Endothelial cell of umbilical vein (primary cell): ENCODE measurements at regions of chr10 and their contacts with region 1.

Region 1: GRCh38 chr10:102420810-102421644 is at the start of gene FBXL15:
- DNase-seq: peak; percentile 96
- H3K4me3 ChIP-seq: peak within 1 kb of the TSS; percentile 64 to 73 (median 70)
- H3K27ac ChIP-seq: no peak within 1 kb of the TSS
- H3K4me1 ChIP-seq: peaks cover 20% of the 10 kb centered on the region
- H3K27me3 ChIP-seq: peaks cover 3 to 7% of the 10 kb centered on the region in 2 experiments
- CTCF ChIP-seq: no peak
- POLR2A ChIP-seq: peak; percentile 27
- total RNA-seq, gene FBXL15: 9.9 and 10.7 TPM in 2 replicates

Region 2: GRCh38 chr10:101901340-101901739 is 519.7 kb before region 1 on chr10:
- CTCF ChIA-PET with region 1: no interaction called
- POLR2A ChIA-PET with region 1: no interaction called
- dilution Hi-C with region 1: no loop called
- intact Hi-C with region 1: no loop called
- DNase-seq: no peak
- H3K4me3 ChIP-seq: no peak overlapping the region
- H3K27ac ChIP-seq: no peak overlapping the region
- H3K4me1 ChIP-seq: no peaks in the 10 kb centered on the region
- H3K27me3 ChIP-seq: no peaks in the 10 kb centered on the region
- CTCF ChIP-seq: no peak
- POLR2A ChIP-seq: no peak

Region 3: DNA sequence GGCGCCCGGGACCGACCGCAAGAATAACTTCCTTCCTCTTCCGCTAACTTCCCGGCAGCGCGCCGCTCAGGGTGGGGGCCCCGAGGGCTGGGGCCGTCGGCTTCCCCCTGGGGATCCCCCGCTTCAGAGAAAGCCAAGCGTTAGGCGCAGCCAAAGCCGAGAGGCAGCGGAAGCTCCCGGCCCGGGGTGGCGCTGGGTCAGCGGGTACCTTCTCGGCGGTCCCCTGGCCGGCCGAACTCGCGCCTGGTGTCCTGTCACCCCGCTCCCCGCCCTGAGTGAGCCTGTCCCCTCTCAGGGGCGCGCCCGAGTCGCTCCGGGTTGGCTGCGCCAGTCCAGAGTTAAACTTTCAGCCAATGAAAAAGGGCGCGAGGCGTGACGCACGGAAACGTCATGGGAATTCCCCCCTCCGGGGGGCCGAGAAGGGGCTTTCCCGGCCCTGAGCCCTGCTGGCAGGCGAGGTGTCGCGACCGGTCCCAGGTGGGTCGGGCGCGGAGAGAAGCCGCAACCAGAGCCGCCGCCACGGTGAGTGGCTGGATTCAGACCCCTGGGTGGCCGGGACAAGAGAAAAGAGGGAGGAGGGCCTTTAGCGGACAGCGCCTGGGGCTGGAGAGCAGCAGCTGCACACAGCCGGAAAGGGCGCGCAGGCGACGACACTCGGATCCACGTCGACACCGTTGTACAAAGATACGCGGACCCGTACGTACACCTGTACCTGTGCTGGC is 26.8 kb before region 1 on chr10:
- CTCF ChIA-PET with region 1: interaction called, 33 read pairs
- POLR2A ChIA-PET with region 1: no interaction called
- dilution Hi-C with region 1: no loop called
- intact Hi-C with region 1: loop called (anchors 1 kb)
- DNase-seq: peak; percentile 93
- H3K4me3 ChIP-seq: peak overlapping the region; percentile 4 to 60 (median 53)
- H3K27ac ChIP-seq: peak overlapping the region; percentile 87
- H3K4me1 ChIP-seq: peaks cover 14% of the 10 kb centered on the region
- H3K27me3 ChIP-seq: peaks cover 6% of the 10 kb centered on the region in 2 experiments
- CTCF ChIP-seq: no peak
- POLR2A ChIP-seq: no peak

Region 4: GRCh38 chr10:102432162-102432950 is 11.3 kb after region 1 on chr10 and contains the start of gene CUEDC2:
- CTCF ChIA-PET with region 1: interaction called, 25 read pairs
- POLR2A ChIA-PET with region 1: interaction called, 6 read pairs
- dilution Hi-C with region 1: no loop called
- intact Hi-C with region 1: loop called (anchors 1 kb)
- DNase-seq: peak; percentile 97
- H3K4me3 ChIP-seq: peak within 1 kb of the TSS; percentile 53 to 87 (median 66)
- H3K27ac ChIP-seq: peak within 1 kb of the TSS; percentile 17
- H3K4me1 ChIP-seq: peaks cover 7% of the 10 kb centered on the region
- H3K27me3 ChIP-seq: peaks cover 11 to 22% of the 10 kb centered on the region in 2 experiments
- CTCF ChIP-seq: no peak
- POLR2A ChIP-seq: peak; percentile 91
- total RNA-seq, gene CUEDC2: 61.5 and 62.6 TPM in 2 replicates

Region 5: GRCh38 chr10:102484021-102484420 is 63.0 kb after region 1 on chr10:
- CTCF ChIA-PET with region 1: interaction called, 28 read pairs
- POLR2A ChIA-PET with region 1: no interaction called
- dilution Hi-C with region 1: no loop called
- intact Hi-C with region 1: no loop called
- DNase-seq: no peak
- H3K4me3 ChIP-seq: no peak overlapping the region
- H3K27ac ChIP-seq: no peak overlapping the region
- H3K4me1 ChIP-seq: no peaks in the 10 kb centered on the region
- H3K27me3 ChIP-seq: no peaks in the 10 kb centered on the region
- CTCF ChIP-seq: no peak
- POLR2A ChIP-seq: no peak

Region 6: GRCh38 chr10:102583435-102584417 is 162.7 kb after region 1 on chr10:
- CTCF ChIA-PET with region 1: interaction called, 26 read pairs
- POLR2A ChIA-PET with region 1: no interaction called
- dilution Hi-C with region 1: no loop called
- intact Hi-C with region 1: no loop called
- DNase-seq: peak; percentile 86
- H3K4me3 ChIP-seq: no peak overlapping the region
- H3K27ac ChIP-seq: no peak overlapping the region
- H3K4me1 ChIP-seq: peaks cover 16% of the 10 kb centered on the region
- H3K27me3 ChIP-seq: no peaks in the 10 kb centered on the region
- CTCF ChIP-seq: peak; percentile 78 to 79
- POLR2A ChIP-seq: no peak

Region 7: GRCh38 chr10:102641880-102642735 is 221.1 kb after region 1 on chr10:
- CTCF ChIA-PET with region 1: no interaction called
- POLR2A ChIA-PET with region 1: no interaction called
- dilution Hi-C with region 1: no loop called
- intact Hi-C with region 1: loop called (anchors 5 kb)
- DNase-seq: peak; percentile 98
- H3K4me3 ChIP-seq: peak overlapping the region; percentile 56 to 86 (median 69)
- H3K27ac ChIP-seq: peak overlapping the region; percentile 86
- H3K4me1 ChIP-seq: peaks cover 12% of the 10 kb centered on the region
- H3K27me3 ChIP-seq: no peaks in the 10 kb centered on the region
- CTCF ChIP-seq: no peak
- POLR2A ChIP-seq: peak; percentile 73

Region 8: DNA sequence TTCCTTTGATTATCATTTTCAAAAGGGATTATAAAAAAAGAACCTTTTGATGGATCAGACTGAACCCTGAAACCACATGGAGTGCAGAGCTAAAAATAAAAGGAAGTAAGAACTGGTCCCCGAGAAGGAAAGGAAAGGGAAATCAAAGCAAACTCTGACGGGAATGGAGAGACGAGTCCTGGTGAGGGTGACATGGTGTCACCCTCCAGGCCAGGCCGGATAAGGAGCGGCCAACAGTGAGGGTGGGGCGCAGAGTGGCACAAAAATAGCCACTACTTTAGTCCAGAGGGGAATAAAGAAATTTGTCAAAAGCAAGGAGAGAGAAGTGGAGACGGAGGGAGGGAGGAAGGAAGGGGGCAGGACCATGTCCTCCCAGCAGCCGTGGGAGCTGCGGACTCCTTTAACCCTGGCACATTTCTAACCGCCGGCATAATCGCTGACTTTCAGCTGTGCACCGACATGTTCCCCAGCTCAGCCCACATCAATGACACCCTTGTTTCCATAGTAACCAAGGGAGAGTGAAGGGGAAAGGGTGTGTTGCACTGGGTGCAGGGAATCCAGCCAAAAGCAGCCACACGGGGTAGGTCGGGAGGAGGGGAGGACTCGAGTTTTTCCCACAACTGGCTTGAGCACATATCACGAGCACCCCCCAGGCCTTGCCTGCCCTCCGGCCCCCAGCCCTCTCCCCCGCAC is 252.9 kb after region 1 on chr10:
- CTCF ChIA-PET with region 1: no interaction called
- POLR2A ChIA-PET with region 1: no interaction called
- dilution Hi-C with region 1: no loop called
- intact Hi-C with region 1: no loop called
- DNase-seq: peak; percentile 41
- H3K4me3 ChIP-seq: peak overlapping the region in 1 of 3 experiments; percentile 9
- H3K27ac ChIP-seq: no peak overlapping the region
- H3K4me1 ChIP-seq: peaks cover 5% of the 10 kb centered on the region
- H3K27me3 ChIP-seq: no peaks in the 10 kb centered on the region
- CTCF ChIP-seq: no peak
- POLR2A ChIP-seq: no peak